ENCODE measurements at regions of chr6 and their contacts with region 1.

Region 1: DNA sequence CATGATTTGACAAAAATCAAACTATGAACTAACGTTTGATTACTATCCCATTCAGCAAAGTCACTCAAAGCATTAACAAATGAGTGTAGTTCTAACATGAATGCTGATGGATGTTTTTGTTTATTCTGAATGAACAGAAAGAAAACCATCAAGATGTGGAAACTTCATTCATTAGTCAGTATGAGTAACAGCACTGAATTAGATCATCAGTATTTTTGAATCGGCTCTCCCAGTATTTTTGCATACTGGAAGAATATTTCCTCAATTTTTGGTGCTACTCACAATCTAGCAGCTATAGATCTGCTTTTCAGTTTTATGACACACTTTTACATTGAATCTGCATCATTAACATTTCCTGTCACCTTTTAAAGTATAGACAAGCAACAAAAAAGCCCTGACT is 63.8 kb upstream of the CD83 start:
- DNase-seq: no peak
- ATAC-seq: no peak; the same call in 1 of the 2 replicates
- H3K4me3 ChIP-seq: no peak overlapping the region
- H3K27ac ChIP-seq: no peak overlapping the region
- H3K4me1 ChIP-seq: no peaks in the 10 kb centered on the region
- H3K27me3 ChIP-seq: no peaks in the 10 kb centered on the region
- CTCF ChIP-seq: no peak

Region 2: DNA sequence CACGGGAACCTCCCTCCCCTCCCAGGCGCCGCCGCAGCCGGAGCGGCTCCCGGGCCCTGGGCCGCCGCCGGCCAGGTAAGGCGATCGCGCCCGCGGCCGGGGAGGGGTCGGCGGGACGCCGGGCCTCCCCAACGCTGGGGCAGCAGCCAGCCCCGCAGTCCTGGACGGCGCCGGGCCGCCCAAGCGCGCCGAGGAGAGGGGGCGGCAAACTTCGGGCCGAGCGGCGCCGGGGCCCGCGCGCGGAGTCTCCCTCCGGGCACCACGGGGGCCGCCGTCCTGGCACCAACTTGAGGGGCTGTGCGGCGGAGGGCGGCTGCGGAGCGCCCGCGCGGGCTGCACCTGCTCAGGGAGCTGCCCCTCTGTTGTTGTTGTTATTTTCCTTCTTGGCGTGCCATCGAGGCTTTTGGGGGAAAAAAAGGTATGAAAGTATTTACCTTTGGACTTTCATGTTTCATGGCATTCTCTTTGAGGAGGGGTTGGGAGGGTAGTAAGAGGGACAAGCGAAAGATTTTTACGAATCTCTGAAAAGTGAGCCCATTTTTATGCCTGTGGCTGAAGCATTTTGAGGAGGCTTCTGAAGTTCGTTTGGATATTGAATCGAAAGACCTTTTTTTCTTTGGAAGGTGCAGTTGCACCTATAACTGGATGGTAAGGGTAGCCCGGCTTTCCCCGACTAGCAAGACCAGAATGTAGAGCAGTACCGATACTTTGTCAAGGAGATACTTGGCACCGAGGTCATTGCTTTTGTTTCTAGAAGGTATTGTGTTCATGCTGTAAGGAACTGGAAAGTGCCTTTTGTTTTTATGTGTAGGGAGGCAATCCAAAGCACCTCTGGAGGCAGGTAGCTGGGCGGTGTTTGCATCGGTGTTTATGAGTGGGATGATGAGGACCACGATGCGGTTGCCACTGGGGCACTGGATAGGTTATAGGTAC is 128.6 kb before region 1 on chr6 and contains the start of gene RNF182:
- CTCF ChIA-PET with region 1: no interaction called
- POLR2A ChIA-PET with region 1: no interaction called
- in situ Hi-C with region 1: no loop called
- intact Hi-C with region 1: loop called (anchors 5 kb)
- DNase-seq: no peak
- ATAC-seq: 0 out of 2 replicates have a peak, but pooled peaks have one; percentile 14
- H3K4me3 ChIP-seq: peak within 1 kb of the TSS; percentile 72 to 83
- H3K27ac ChIP-seq: peak within 1 kb of the TSS; percentile 84
- H3K4me1 ChIP-seq: peaks cover 17% of the 10 kb centered on the region
- H3K27me3 ChIP-seq: no peaks in the 10 kb centered on the region
- CTCF ChIP-seq: no peak
- total RNA-seq, gene RNF182: 22.2 TPM

Measured in Panc1 (cell line).